ENCODE measurements at regions of chr2 and their contacts with region 1.

Region 1: DNA sequence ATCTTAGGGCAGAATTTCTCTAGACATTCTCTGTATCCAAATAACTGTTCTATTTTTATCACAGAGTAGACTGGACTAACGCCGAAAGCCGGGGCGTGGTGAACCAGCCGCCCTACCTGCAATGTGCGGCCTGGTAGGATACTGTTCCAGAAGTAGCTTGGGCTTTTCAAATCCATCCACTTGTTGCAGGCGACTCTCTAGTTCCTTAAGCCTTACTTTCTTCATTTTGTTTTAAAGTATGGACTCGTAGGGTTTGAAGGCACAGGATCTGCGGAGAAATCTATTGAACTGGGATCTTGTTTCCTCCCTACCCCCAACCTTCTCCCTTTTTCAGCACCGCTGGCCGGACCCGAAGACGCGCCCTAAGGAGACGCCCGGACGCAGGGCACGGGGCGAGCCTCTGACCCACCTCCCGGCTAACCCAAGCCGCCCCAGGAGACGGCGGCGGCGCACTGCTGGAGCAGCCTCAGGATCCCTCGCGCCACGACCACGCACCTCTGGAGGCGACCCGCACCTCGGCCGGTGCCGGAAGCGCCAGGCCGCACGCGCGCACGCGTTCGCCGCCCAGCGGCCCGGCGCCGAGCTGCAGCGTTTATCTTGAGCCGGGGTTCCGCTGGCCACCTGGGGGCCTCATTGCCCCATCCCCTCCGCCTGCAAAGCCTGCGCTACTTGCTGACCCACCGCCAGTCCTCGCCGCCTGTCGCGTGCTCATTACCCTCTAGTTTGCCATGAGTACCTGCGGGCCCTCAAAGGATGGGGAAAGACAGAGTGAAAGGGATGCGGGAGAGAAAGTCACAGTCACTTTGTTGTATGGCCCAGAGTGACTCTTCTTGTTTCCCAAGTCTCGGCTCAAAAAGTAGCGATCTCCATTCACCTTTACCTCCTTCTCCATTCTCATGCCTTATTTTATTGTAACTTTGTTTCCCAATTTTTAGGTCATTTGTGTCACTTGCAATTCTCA is at the start of gene METTL5:
- DNase-seq: peak; percentile 69 to 79 (median 73)
- H3K4me3 ChIP-seq: peak within 1 kb of the TSS; percentile 77 to 88
- H3K4me3 Mint-ChIP-seq: peak within 1 kb of the TSS; percentile 90 to 98 (median 94)
- H3K27ac ChIP-seq: peak within 1 kb of the TSS; percentile 66
- H3K27ac Mint-ChIP-seq: peak within 1 kb of the TSS; percentile 74 to 96 (median 92)
- H3K4me1 ChIP-seq: peaks cover 56% of the 10 kb centered on the region
- H3K4me1 Mint-ChIP-seq: peaks cover 33 to 72% (median 51%) of the 10 kb centered on the region in 4 donors
- H3K27me3 ChIP-seq: no peaks in the 10 kb centered on the region
- H3K27me3 Mint-ChIP-seq: no peaks in the 10 kb centered on the region
- total RNA-seq, gene METTL5: 44.4 to 50.4 TPM

Region 2: GRCh38 chr2:169584005-169584877 is 240.4 kb before region 1 on chr2 and contains the start of gene PPIG:
- CTCF ChIA-PET with region 1: interaction called, 3 read pairs
- POLR2A ChIA-PET with region 1: interaction called, 10 read pairs
- intact Hi-C with region 1: no loop called
- DNase-seq: peak; percentile 86 to 93 (median 89)
- H3K4me3 ChIP-seq: peak within 1 kb of the TSS; percentile 76 to 92
- H3K4me3 Mint-ChIP-seq: peak within 1 kb of the TSS; percentile 96 to 100 (median 98)
- H3K27ac ChIP-seq: peak within 1 kb of the TSS; percentile 94
- H3K27ac Mint-ChIP-seq: peak within 1 kb of the TSS; percentile 98 to 100 (median 100)
- H3K4me1 ChIP-seq: peaks cover 35% of the 10 kb centered on the region
- H3K4me1 Mint-ChIP-seq: peaks cover 20 to 49% (median 34%) of the 10 kb centered on the region in 4 donors
- H3K27me3 ChIP-seq: no peaks in the 10 kb centered on the region
- H3K27me3 Mint-ChIP-seq: no peaks in the 10 kb centered on the region
- total RNA-seq, gene PPIG: 79.2 to 82.9 TPM

Region 3: DNA sequence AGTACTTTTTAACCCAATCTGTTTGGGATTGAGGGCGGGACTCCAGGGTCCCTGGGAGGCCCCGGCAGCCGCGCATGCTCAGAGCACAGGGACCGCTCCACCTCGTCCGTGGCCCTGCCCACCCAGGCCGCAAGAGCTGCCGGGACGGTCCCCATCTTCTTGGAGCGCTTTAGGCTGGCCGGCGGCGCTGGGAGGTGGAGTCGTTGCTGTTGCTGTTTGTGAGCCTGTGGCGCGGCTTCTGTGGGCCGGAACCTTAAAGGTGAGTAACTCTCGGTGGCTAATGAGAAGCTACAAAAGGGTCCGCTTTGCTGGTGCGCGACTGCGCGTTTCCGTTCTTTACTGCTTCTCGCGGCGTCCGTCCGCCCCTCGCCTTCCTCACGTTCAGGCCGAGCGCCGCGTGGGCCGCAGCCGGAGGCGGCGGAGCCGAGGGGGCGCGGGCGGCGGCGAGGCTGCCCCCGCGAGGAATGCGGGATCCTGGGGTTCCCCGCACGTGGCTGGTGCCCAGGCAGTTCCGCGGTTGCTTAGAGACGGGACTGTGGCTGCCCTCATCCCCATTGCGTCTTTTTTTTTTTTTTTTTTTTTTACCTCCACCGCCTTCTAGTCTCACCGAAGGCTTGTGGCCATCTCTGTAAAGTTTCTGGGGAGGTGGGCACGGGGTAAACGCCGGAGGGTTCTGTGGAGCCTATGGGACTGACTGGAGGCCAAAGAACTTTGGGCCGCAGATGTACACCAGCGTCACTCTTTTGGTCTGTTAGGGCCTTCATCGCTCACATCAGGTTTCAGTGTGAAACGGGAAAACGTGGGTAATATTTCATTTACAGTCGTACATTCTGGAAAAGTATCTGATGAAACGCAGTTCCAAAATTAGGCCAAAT is 25.7 kb before region 1 on chr2 and contains the start of gene SSB:
- CTCF ChIA-PET with region 1: interaction called, 4 read pairs
- POLR2A ChIA-PET with region 1: interaction called, 33 read pairs
- intact Hi-C with region 1: loop called (anchors 1 kb)
- DNase-seq: peak; percentile 87 to 95 (median 89)
- H3K4me3 ChIP-seq: peak within 1 kb of the TSS; percentile 45 to 95
- H3K4me3 Mint-ChIP-seq: peak within 1 kb of the TSS; percentile 84 to 95 (median 92)
- H3K27ac ChIP-seq: peak within 1 kb of the TSS; percentile 85
- H3K27ac Mint-ChIP-seq: peak within 1 kb of the TSS; percentile 93 to 97 (median 95)
- H3K4me1 ChIP-seq: peaks cover 43% of the 10 kb centered on the region
- H3K4me1 Mint-ChIP-seq: peaks cover 16 to 45% (median 33%) of the 10 kb centered on the region in 4 donors
- H3K27me3 ChIP-seq: no peaks in the 10 kb centered on the region
- H3K27me3 Mint-ChIP-seq: peaks cover 0 to 5% of the 10 kb centered on the region in 2 donors
- total RNA-seq, gene SSB: 112 to 114 TPM

Region 4: DNA sequence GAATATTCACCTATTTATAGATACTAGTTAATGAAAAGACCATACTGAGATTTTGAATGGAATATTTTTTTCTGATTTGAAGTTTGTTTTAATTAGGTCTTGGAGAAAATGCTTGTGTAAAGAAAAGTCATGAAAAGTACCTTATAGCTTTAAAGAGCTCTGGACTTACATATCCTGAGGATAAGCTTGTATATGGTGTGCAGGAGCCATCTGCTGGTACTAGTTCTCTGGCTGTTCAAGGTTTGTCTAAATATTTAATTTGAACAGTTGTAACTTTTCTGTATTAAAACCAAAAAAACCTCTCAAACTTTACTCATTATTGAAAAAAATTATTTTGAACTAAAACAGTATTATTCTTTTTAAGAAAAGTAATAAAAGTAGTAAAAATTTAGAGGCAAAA is 52.7 kb after region 1 on chr2:
- CTCF ChIA-PET with region 1: interaction called, 14 read pairs
- POLR2A ChIA-PET with region 1: interaction called, 3 read pairs
- intact Hi-C with region 1: loop called (anchors 5 kb)
- DNase-seq: no peak
- H3K4me3 ChIP-seq: no peak overlapping the region
- H3K4me3 Mint-ChIP-seq: no peak overlapping the region
- H3K27ac ChIP-seq: no peak overlapping the region
- H3K27ac Mint-ChIP-seq: peak overlapping the region in 1 of 7 donors; percentile 35
- H3K4me1 ChIP-seq: no peaks in the 10 kb centered on the region
- H3K4me1 Mint-ChIP-seq: peaks cover 0 to 2% (median 0%) of the 10 kb centered on the region in 4 donors
- H3K27me3 ChIP-seq: no peaks in the 10 kb centered on the region
- H3K27me3 Mint-ChIP-seq: no peaks in the 10 kb centered on the region